Activated T-helper 2 cell treated with anti-CD3 and anti-CD28 coated beads, Interferon-gamma antibody, Interleukin-2, Interleukin-4, amounts not matched to agents 10 μg/mL and 5 μg/mL and 100 μg/mL, durations not matched to agents 14 hours and 24 hours and 36 hours (primary cell): ENCODE measurements at regions of chr4 and their contacts with region 1.

Region 1: GRCh38 chr4:55395529-55396307 is at the start of gene TMEM165:
- DNase-seq: peak; percentile 86
- H3K4me3 Mint-ChIP-seq: peak within 1 kb of the TSS; percentile 98
- H3K27ac Mint-ChIP-seq: peak within 1 kb of the TSS; percentile 97
- H3K4me1 Mint-ChIP-seq: peaks cover 31% of the 10 kb centered on the region
- H3K27me3 Mint-ChIP-seq: no peaks in the 10 kb centered on the region
- total RNA-seq, gene TMEM165: 89.3 and 91.4 TPM in 2 replicates

Region 2: GRCh38 chr4:55291227-55291640 is 104.5 kb before region 1 on chr4:
- intact Hi-C with region 1: no loop called
- DNase-seq: no peak
- H3K4me3 Mint-ChIP-seq: no peak overlapping the region
- H3K27ac Mint-ChIP-seq: no peak overlapping the region
- H3K4me1 Mint-ChIP-seq: no peaks in the 10 kb centered on the region
- H3K27me3 Mint-ChIP-seq: no peaks in the 10 kb centered on the region

Region 3: DNA sequence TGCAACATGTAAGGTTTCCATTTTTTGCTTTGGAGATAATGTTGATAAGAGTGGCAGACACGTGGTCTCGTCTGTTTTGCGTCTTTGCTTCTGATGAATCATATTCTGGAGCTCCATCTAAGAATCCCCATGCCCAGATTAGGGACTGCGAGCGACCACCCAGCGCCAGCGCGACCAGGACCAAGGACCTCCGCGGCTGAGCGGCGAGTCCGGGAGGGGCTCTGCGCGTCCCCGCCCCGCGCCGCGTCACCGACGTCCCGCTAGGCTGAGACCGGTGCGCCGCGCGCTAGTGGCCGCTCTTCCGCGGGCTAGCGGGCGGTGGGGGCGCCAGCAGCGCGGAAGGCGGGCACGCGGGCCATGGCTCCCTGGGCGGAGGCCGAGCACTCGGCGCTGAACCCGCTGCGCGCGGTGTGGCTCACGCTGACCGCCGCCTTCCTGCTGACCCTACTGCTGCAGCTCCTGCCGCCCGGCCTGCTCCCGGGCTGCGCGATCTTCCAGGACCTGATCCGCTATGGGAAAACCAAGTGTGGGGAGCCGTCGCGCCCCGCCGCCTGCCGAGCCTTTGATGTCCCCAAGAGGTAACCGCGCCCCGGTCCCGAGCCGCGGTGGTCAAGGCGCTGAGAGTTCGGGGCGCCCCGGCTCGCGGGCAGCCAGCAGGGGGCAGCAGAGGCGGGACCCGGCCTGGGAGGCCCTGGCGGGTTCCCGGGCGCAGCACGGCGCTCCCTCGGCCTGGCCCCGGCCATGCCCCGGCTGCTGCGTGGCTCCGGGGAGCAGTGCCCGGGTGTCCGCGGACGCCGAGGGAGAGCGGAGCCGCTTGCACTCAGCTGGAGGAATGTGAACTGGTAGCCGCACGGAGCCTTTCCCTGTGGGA is 49.5 kb before region 1 on chr4 and contains the start of gene SRD5A3:
- intact Hi-C with region 1: loop called (anchors 1 kb)
- DNase-seq: peak; percentile 72
- H3K4me3 Mint-ChIP-seq: peak within 1 kb of the TSS; percentile 90
- H3K27ac Mint-ChIP-seq: peak within 1 kb of the TSS; percentile 95
- H3K4me1 Mint-ChIP-seq: peaks cover 29% of the 10 kb centered on the region
- H3K27me3 Mint-ChIP-seq: no peaks in the 10 kb centered on the region
- total RNA-seq, gene SRD5A3: 32.4 and 33.5 TPM in 2 replicates